Dendritic cell treated with granulocyte-macrophage colony-stimulating factor and Interleukin-4, amounts not matched to agents 40 ng/mL and 50 ng/mL, for 4 days (primary cell): ENCODE measurements at regions of chr10 and their contacts with region 1.

Region 1: GRCh38 chr10:26378861-26379294 is 59.3 kb upstream of the APBB1IP start:
- H3K4me3 Mint-ChIP-seq: no peak overlapping the region
- H3K27ac Mint-ChIP-seq: no peak overlapping the region
- H3K4me1 Mint-ChIP-seq: peaks cover 50% of the 10 kb centered on the region
- H3K27me3 Mint-ChIP-seq: no peaks in the 10 kb centered on the region

Region 2: DNA sequence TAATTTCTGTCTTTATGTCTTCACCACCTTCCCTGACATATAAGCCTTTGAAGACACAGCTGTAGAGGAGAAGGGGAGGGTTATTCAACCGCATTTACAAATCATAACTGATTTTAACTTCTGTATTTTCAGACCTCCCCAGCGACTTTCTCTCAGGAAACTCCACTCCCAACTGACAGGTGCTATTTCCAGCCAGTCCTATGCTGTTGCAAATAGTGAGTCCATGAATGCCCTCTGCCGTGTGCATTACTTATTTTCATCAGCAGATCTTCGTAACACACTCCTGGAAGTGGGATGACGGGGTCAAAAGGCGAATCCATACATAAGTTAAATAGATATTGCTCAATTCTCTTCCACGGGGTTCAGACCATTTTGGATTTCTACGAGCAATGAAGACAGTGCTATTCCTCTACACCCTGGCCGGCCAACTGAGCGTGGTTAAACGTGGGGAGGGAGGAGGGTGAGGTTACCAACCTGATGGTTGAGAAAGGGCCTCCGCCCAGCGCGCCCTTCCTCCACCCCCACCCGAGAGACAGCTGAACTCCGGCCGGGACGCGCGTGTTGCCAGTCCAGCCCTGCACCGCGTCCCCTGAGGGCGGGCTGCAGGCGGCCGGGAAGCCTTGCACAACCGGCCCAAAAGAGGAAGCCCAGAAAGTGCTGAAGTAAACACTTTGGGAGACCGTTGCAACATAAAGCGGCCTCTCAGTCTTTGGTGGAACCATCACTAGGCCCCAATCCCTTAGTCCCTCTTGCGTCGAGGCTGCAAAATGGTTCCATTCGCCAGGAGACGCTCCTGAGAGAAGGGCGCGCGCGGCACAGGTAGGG is 59.0 kb after region 1 on chr10 and contains the start of gene APBB1IP:
- intact Hi-C with region 1: loop called (anchors 5 kb)
- H3K4me3 Mint-ChIP-seq: peak within 1 kb of the TSS; percentile 94
- H3K27ac Mint-ChIP-seq: peak within 1 kb of the TSS; percentile 97
- H3K4me1 Mint-ChIP-seq: peaks cover 53% of the 10 kb centered on the region
- H3K27me3 Mint-ChIP-seq: no peaks in the 10 kb centered on the region

Region 3: GRCh38 chr10:26642896-26643653 is 264.2 kb after region 1 on chr10:
- intact Hi-C with region 1: no loop called
- H3K4me3 Mint-ChIP-seq: no peak overlapping the region
- H3K27ac Mint-ChIP-seq: no peak overlapping the region
- H3K4me1 Mint-ChIP-seq: peaks cover 15% of the 10 kb centered on the region
- H3K27me3 Mint-ChIP-seq: no peaks in the 10 kb centered on the region